KBM-7 (cell line): ENCODE measurements at regions of chr1 and their contacts with region 1.

Region 1: GRCh38 chr1:174999216-174999925 is 376 bp upstream of the CACYBP start:
- DNase-seq: peak; percentile 99

Region 2: GRCh38 chr1:174789399-174789798 is 210.0 kb before region 1 on chr1:
- in situ Hi-C with region 1: loop called (anchors 25 kb)
- DNase-seq: peak; percentile 14